ENCODE measurements at regions of chr17 and their contacts with region 1.

Region 1: GRCh38 chr17:61551255-61551742 is 39.7 kb downstream of the NACA2 start:
- DNase-seq: peak; percentile 57
- H3K4me3 ChIP-seq: no peak overlapping the region
- H3K27ac ChIP-seq: no peak overlapping the region
- H3K4me1 ChIP-seq: peaks cover 3% of the 10 kb centered on the region
- H3K27me3 ChIP-seq: peaks cover 46% of the 10 kb centered on the region
- CTCF ChIP-seq: peak; percentile 75

Region 2: DNA sequence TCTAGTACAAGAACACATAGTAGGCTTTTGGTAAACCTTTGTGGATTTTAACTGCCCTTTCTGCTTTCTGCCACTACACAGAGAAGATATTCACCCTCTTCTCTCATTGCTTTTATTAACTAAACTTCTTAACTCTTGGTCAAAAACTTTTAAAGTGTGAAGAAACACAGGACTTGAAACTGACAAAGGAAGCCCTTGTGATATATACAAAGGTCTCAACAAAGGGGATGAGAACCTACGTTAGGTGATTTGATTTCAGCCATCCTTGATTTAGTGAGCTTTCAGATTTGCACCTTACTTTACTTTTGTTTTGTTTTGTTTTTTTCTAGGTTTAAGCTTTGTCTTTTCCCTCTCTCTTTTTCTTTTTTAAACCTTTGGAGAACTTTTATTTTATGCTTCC is 32.2 kb before region 1 on chr17:
- CTCF ChIA-PET with region 1: interaction called, 4 read pairs
- POLR2A ChIA-PET with region 1: interaction called, 13 read pairs
- intact Hi-C with region 1: no loop called
- DNase-seq: no peak
- H3K4me3 ChIP-seq: no peak overlapping the region
- H3K27ac ChIP-seq: no peak overlapping the region
- H3K4me1 ChIP-seq: no peaks in the 10 kb centered on the region
- H3K27me3 ChIP-seq: no peaks in the 10 kb centered on the region
- CTCF ChIP-seq: no peak

Measured in A673 (cell line).